Activated T-helper 2 cell treated with anti-CD3 and anti-CD28 coated beads, Interferon-gamma antibody, Interleukin-2, Interleukin-4, amounts not matched to agents 10 μg/mL and 5 μg/mL and 100 μg/mL, durations not matched to agents 14 hours and 24 hours and 36 hours (primary cell): ENCODE measurements at regions of chr3 and their contacts with region 1.

Region 1: DNA sequence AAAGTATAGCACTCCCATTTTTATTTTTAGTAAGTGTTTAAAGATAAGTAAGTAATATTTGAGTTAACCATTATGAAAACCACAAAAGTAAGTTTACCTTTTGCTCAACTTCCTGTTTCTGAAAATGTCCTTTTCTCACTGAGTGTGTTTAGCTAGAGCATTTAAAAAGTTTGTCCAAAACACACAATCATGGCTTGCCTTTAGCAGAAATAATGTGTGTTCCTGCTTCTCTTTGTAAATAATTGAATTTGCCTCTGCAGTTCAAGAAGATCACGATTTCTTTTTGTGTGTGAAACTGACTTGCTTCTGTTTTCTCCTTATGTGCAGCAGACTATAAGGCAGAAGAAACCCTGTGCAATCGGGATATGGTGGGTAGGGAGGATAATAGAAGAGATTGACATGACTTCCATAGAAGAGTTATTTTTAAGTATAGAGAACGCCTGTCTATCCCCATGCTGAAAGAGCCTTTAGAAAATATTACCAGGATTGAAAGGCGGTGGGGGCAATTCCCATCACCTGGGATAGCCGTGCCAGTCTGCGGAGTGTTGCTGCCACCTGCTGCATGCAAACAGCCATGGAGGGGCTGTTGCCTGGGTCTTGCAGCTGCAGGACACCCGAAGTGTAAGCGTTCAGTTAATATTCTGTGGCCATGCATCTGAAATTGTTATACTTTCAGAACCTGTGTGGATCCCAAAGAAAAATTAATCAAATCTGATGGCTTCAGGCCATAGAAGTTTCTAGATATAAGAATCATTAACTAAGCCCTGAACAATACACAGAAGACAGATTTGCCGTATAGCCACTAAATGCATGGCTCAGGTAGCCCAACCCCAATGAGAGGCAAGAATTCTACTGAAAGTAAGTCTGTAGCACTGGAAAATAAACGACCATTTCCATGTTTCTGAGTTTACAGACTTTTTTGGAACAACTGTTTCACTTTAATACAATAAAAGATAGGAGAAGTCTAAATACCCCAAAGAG is 2.4 kb upstream of the CD96 start:
- DNase-seq: peak; percentile 36
- H3K4me3 Mint-ChIP-seq: peak overlapping the region; percentile 69
- H3K27ac Mint-ChIP-seq: peak overlapping the region; percentile 85
- H3K4me1 Mint-ChIP-seq: peaks cover 66% of the 10 kb centered on the region
- H3K27me3 Mint-ChIP-seq: no peaks in the 10 kb centered on the region

Region 2: GRCh38 chr3:109806929-109807328 is 1732.7 kb before region 1 on chr3:
- intact Hi-C with region 1: loop called (anchors 2 kb)
- DNase-seq: peak; percentile 26
- H3K4me3 Mint-ChIP-seq: peak overlapping the region; percentile 66
- H3K27ac Mint-ChIP-seq: peak overlapping the region; percentile 81
- H3K4me1 Mint-ChIP-seq: peaks cover 28% of the 10 kb centered on the region
- H3K27me3 Mint-ChIP-seq: peaks cover 5% of the 10 kb centered on the region

Region 3: GRCh38 chr3:111238885-111239284 is 300.8 kb before region 1 on chr3:
- intact Hi-C with region 1: loop called (anchors 1 kb)
- DNase-seq: peak; percentile 40
- H3K4me3 Mint-ChIP-seq: no peak overlapping the region
- H3K27ac Mint-ChIP-seq: no peak overlapping the region
- H3K4me1 Mint-ChIP-seq: peaks cover 26% of the 10 kb centered on the region
- H3K27me3 Mint-ChIP-seq: peaks cover 6% of the 10 kb centered on the region

Region 4: DNA sequence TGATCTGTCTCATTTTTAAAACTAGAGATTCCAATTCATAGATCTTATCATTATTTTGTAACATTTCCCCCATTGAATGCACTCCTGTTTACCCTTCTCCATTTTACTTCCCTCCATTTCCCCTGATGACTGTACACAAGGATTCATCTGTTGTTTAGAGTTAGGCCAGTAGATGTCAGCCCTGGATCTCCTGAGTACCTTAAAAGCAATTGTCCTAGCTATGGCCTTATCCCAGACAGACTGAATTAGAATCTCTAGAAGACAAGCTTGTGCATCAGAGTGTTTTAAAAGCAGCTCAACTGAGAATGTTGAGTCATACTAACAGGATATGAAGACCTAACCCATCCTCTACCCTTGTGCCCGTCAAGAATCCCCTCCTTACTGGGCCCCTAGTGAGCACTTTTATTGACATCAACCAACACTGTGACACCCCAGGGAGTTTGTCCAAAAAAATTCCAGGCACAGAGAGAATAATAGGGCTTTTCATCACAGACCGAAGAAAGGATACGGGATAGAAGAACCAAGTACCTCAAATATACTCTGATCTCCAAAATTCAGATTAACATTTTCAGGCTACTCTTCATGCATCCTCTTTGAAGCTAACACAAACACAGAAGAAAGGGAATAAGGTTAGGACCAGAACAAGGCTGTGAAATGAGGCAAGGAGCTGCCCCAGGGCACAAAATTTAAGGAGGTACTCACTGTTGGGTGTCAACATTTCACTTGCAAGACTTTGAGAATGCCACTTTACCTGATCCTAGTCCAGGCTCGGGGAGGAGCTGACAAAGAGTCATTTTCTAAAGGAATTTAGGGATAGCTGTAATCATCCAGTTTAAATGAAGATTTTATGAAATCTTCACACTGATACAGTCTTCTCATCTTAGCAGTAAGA is 38.4 kb after region 1 on chr3:
- intact Hi-C with region 1: loop called (anchors 1 kb)
- DNase-seq: no peak
- H3K4me3 Mint-ChIP-seq: no peak overlapping the region
- H3K27ac Mint-ChIP-seq: peak overlapping the region; percentile 46
- H3K4me1 Mint-ChIP-seq: peaks cover 65% of the 10 kb centered on the region
- H3K27me3 Mint-ChIP-seq: no peaks in the 10 kb centered on the region

Region 5: DNA sequence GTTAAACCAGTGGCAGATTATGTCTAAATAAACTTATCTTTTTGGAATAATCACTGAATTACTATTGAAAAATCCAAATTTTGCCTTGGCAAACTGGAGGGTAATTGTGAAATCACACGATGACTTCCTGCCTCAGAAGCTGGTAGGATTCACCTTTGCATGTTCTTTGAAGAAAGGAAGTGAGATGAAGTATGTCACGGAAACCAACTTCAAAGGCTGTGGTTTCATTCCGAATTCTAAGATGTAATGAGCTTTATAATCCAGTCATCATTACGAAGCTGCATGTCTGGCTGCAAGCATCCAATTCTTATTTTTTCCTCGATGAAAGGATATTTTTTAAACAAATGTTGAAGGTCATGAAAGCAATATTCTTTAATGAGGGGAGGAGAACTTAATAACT is 70.5 kb after region 1 on chr3:
- intact Hi-C with region 1: loop called (anchors 1 kb)
- DNase-seq: peak; percentile 39
- H3K4me3 Mint-ChIP-seq: peak overlapping the region; percentile 69
- H3K27ac Mint-ChIP-seq: peak overlapping the region; percentile 98
- H3K4me1 Mint-ChIP-seq: peaks cover 93% of the 10 kb centered on the region
- H3K27me3 Mint-ChIP-seq: no peaks in the 10 kb centered on the region